Mammary epithelial cell (primary cell): ENCODE measurements at regions of chr9 and their contacts with region 1.

Region 1: DNA sequence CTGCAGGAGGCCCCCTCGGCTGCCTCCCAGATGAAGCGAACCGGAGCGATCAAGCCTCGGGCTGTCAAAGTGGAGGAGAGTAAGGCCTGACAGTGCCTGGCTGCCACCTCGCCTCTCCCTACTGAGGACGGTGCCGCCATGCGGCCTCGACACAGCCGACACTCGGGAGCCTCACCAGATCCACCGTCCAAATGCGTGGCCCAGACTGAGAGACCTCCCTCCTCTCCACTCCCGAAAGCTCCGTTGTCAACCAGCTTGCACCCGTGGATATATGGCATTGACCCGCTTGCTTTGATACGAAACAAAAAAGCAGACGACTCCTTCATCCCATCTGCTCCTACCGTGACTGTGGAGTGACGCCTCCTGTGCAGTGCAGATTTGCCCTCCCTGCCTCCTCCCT is 6.9 kb upstream of the POMT1 start:
- DNase-seq: no peak
- H3K4me3 ChIP-seq: no peak overlapping the region
- H3K27ac ChIP-seq: no peak overlapping the region
- H3K4me1 ChIP-seq: peaks cover 6% of the 10 kb centered on the region
- H3K27me3 ChIP-seq: no peaks in the 10 kb centered on the region
- CTCF ChIP-seq: no peak

Region 2: DNA sequence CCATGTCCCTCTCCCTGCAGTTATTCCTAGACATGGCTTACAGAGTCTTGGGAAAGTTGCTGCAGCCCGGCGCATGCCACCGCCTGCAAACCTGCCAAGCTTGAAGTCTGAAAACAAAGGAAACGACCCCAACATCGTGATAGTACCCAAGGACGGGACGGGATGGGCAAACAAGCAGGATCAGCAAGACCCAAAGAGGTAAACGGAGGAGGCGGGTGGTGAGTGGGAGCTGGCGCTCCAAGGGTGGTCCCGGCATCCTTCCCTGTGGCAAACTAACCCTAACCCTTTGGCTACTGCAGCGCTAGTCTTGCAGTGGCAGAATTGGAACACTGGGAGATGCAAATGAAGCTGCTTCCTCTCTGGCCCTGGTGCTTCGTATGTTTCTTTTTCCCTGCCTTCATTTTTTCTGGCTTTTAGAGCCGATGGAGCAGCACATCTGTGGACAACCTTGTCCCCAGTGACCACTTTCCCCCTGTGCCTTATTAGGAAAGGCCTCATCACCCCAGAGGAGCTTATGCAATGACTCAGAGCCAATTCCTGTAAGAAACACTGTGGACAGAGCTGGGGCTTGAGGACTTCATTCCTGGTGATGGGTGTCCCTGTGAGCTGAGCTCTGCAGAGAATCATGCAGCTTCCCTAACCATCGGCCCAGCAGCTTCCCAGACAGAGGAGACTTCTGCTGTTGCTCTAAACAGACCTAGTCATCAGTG is 63.0 kb before region 1 on chr9:
- CTCF ChIA-PET with region 1: no interaction called
- dilution Hi-C with region 1: loop called (anchors 5 kb)
- in situ Hi-C with region 1: no loop called
- intact Hi-C with region 1: no loop called
- DNase-seq: peak; percentile 51
- H3K4me3 ChIP-seq: no peak overlapping the region
- H3K27ac ChIP-seq: no peak overlapping the region
- H3K4me1 ChIP-seq: peaks cover 25% of the 10 kb centered on the region
- H3K27me3 ChIP-seq: no peaks in the 10 kb centered on the region
- CTCF ChIP-seq: no peak

Region 3: DNA sequence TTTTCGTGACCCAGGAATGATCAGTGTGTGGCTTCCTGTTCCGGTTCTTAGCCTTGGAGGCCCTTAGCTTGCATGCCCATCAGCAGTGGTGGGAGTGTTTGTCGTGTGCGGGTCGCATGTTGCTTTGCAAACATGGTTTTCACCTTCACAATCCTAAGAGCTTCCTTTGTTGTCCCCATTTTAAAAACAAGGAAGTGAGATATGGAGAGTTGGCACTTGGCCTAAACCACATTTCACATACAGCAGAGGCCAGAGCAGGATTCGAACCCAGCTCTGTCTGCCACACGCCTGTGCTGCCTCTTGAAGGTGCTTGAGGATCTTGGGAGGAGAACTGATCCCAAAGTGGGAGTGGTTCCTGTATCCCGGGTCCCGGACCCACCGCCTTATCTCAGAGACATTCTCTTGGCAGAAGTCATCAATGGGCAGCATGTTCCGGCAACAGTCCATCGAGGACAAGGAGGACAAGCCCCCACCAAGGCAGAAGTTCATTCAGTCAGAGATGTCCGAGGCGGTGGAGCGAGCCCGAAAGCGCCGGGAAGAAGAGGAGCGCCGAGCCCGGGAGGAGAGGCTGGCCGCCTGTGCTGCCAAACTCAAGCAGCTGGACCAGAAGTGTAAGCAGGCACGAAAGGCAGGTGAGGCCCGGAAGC is 31.3 kb before region 1 on chr9:
- CTCF ChIA-PET with region 1: no interaction called
- dilution Hi-C with region 1: loop called (anchors 5 kb)
- in situ Hi-C with region 1: no loop called
- intact Hi-C with region 1: no loop called
- DNase-seq: no peak
- H3K4me3 ChIP-seq: no peak overlapping the region
- H3K27ac ChIP-seq: no peak overlapping the region
- H3K4me1 ChIP-seq: no peaks in the 10 kb centered on the region
- H3K27me3 ChIP-seq: no peaks in the 10 kb centered on the region
- CTCF ChIP-seq: no peak